ENCODE measurements at regions of chrX and their contacts with region 1.

Region 1: DNA sequence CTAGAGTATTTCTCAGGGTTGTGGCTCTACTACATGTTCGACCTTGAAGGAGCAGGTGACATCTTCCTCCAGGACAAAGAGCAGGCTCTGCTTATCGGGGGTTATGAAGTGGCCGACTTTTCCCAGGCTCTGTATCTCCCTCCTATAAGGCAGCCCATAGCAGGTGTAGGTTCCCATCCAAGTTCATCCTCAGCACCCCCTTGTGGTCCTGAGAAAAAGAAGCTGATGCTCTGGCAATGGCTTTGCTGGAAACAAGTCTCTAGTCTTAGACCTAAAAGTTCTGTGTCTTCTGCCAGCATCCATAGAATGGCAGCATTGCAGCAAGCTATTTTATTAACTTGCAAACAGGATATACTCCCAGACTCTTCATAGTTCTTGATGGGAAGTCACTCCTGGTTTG is 836.6 kb upstream of the PRKX start:
- ATAC-seq: no peak
- H3K4me3 ChIP-seq: no peak overlapping the region
- H3K27ac ChIP-seq: no peak overlapping the region
- H3K4me1 ChIP-seq: no peaks in the 10 kb centered on the region

Region 2: DNA sequence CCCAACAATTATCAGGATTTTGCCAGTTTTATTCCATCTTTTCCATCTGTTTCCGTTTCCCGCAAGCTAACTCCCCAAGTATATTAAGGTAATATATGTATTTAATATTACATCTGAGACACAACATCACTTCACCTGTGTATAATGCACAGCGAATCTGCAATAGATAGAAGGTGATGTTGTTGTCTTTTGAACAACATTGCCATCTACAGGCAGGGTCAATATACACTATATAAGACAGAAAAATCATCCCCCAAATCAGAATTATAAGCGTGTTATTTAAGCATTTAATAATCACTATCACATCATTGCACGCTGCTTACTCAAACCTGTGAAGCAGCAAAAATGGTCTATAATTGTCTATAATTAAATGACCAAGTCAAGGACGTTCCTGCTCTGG is 563.1 kb after region 1 on chrX:
- in situ Hi-C with region 1: loop called in 1 of 9 experiments (anchors 25 kb)
- ATAC-seq: no peak
- H3K4me3 ChIP-seq: no peak overlapping the region
- H3K27ac ChIP-seq: no peak overlapping the region
- H3K4me1 ChIP-seq: no peaks in the 10 kb centered on the region